Right lobe of liver (tissue), 6 donors: ENCODE measurements at regions of chr17 and their contacts with region 1.

Region 1: DNA sequence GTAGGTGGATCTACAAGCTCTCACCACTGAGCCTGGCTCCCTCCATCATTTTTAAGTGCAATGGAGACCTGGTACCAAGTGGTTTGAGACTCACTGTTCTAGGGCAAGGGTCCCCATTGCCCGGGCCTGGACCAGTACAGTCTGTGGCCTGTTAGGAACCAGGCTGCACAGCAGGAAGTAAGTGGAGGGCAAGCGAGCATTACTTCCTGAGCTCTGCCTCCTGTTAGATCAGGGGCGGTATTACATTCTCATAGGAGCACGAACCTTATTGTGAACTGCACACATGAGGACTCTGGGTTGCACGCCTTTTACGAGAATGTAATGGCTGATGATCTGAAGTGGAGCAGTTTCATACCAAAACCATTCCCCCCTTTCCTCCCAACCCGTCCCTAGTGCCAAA is 6.8 kb upstream of the ZNF594 start:
- DNase-seq: no peak
- ATAC-seq: peak in 1 of 4 donors; percentile 37
- H3K4me3 ChIP-seq: no peak overlapping the region
- H3K27ac ChIP-seq: no peak overlapping the region
- H3K4me1 ChIP-seq: no peaks in the 10 kb centered on the region
- H3K27me3 ChIP-seq: no peaks in the 10 kb centered on the region
- CTCF ChIP-seq: no peak
- POLR2A ChIP-seq: no peak

Region 2: DNA sequence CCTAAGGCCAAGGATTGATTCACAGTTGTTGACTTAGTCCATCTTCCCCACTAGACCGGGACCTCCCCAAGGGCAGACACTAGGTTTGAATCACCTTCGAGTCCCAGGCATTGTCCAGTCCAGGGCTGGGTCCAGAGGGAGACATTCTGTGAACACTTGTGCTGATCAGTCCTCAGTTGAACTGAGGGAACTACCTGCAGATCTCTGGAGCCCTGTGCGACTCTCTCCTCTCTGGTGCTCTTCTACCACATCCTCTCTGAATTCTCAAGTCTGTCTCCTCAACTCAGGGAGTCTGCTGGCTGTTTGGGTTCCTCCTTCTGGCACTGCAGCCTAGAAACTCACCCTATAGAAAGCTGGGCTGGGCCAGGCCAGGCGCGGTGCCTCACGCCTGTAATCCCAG is 97.6 kb before region 1 on chr17:
- intact Hi-C with region 1: no loop called
- DNase-seq: no peak
- ATAC-seq: peak in 1 of 4 donors; percentile 10
- H3K4me3 ChIP-seq: no peak overlapping the region
- H3K27ac ChIP-seq: no peak overlapping the region
- H3K4me1 ChIP-seq: no peaks in the 10 kb centered on the region
- H3K27me3 ChIP-seq: no peaks in the 10 kb centered on the region
- CTCF ChIP-seq: no peak
- POLR2A ChIP-seq: no peak

Region 3: DNA sequence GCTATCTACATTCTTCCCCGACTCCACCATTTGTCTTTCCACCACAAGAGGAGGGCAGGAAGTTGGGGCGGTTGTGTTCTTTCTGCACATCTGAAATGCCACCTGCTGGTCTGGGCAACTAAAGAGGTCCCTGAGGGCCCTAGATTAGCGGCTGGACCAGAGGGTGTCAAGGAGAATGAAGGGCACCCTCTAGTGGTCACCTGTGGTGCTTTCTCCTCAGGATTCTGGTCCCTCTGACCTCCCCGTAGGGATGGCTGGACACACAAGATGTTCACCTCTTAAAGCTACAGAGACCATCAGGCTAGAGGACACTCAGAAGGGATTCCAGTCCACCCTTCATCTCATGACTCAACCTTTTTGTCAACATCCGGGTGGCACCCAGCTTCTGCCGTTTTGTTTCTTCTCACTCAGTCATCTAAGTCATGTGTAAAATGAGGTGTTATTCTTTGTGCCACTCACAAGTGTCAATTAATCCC is 39.1 kb after region 1 on chr17:
- intact Hi-C with region 1: loop called in 1 of 2 experiments (anchors 5 kb)
- DNase-seq: peak; percentile 54 to 76 (median 70)
- ATAC-seq: peak; percentile 89 to 96 (median 93)
- H3K4me3 ChIP-seq: no peak overlapping the region
- H3K27ac ChIP-seq: no peak overlapping the region
- H3K4me1 ChIP-seq: peaks cover 0 to 10% (median 5%) of the 10 kb centered on the region in 4 donors
- H3K27me3 ChIP-seq: no peaks in the 10 kb centered on the region
- CTCF ChIP-seq: peak; percentile 70 to 91 (median 82)
- POLR2A ChIP-seq: no peak

Region 4: DNA sequence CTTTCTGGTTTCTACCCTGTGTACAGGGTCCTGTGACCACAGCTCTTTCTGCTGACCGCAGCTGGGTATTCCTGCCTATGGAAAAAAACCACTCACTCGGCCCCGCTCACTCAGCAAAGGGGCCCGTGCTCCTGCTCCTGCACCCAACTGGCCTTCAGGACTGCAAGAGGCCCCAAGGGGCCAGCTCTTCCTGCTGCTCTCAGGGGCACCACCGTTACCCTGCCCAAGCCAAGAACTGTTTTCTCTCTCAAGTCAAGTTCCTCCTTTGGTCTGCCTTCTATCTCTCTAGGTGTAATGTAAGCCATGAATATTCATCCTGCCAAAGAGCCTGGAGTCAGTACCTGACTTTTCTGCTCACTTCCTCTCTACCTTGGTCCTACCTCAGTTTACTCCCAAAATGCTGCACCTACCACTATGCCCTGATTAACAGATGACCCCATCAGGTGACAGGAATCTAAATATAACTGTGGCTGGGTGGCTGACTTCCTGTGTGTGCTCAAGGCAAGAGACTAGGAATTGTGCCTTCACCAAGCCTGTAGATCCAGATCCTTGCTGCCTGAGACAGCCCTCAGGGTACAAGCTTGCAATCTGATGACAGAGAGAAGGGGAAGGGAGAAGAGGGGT is 56.5 kb after region 1 on chr17:
- intact Hi-C with region 1: no loop called
- DNase-seq: no peak
- ATAC-seq: peak in 3 of 4 donors; percentile 19 to 38 (median 21)
- H3K4me3 ChIP-seq: no peak overlapping the region
- H3K27ac ChIP-seq: no peak overlapping the region
- H3K4me1 ChIP-seq: no peaks in the 10 kb centered on the region
- H3K27me3 ChIP-seq: no peaks in the 10 kb centered on the region
- CTCF ChIP-seq: no peak
- POLR2A ChIP-seq: no peak